Mammary epithelial cell (primary cell): ENCODE measurements at regions of chr22 and their contacts with region 1.

Region 1: GRCh38 chr22:41301105-41302020 is at the start of gene ZC3H7B:
- DNase-seq: peak; percentile 80
- H3K4me3 ChIP-seq: peak within 1 kb of the TSS; percentile 82 to 90 (median 86)
- H3K27ac ChIP-seq: peak within 1 kb of the TSS; percentile 75
- H3K4me1 ChIP-seq: peaks cover 21% of the 10 kb centered on the region
- H3K27me3 ChIP-seq: no peaks in the 10 kb centered on the region
- CTCF ChIP-seq: peak in 1 of 2 donors; percentile 70
- total RNA-seq, gene ZC3H7B: 30.0 to 62.9 TPM

Region 2: DNA sequence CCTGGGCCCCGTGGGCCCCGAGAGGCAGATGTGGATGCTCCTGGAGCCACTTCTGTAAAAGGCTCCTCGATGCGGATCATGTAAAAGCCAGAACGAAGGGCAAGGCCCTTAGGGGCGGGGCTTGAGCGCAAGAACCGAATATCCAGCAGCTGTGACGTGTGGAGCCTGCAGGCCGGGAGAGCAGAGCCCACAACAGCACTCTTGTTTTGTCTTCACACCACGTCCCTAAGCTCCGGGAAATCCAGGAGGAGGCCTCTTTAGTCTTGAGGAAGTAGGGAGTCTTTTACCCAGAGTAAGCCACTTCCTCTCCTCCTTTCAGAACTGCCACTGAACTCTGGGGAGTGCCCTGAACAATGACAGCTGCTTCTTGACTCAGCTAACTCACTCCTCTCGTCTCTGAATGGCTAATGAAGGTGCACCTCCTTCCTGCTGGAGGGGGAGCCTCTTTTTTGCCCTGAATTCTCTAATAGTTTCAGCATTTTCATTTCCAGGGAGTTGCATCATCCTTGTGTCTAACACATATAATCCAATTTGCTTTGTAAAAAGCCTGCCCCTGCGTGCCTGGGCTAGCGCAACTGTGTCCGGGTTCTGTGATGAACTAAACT is 83.7 kb before region 1 on chr22:
- CTCF ChIA-PET with region 1: no interaction called
- dilution Hi-C with region 1: no loop called
- in situ Hi-C with region 1: no loop called
- intact Hi-C with region 1: loop called (anchors 1 kb)
- DNase-seq: no peak
- H3K4me3 ChIP-seq: no peak overlapping the region
- H3K27ac ChIP-seq: peak overlapping the region; percentile 9
- H3K4me1 ChIP-seq: peaks cover 12% of the 10 kb centered on the region
- H3K27me3 ChIP-seq: no peaks in the 10 kb centered on the region
- CTCF ChIP-seq: no peak

Region 3: DNA sequence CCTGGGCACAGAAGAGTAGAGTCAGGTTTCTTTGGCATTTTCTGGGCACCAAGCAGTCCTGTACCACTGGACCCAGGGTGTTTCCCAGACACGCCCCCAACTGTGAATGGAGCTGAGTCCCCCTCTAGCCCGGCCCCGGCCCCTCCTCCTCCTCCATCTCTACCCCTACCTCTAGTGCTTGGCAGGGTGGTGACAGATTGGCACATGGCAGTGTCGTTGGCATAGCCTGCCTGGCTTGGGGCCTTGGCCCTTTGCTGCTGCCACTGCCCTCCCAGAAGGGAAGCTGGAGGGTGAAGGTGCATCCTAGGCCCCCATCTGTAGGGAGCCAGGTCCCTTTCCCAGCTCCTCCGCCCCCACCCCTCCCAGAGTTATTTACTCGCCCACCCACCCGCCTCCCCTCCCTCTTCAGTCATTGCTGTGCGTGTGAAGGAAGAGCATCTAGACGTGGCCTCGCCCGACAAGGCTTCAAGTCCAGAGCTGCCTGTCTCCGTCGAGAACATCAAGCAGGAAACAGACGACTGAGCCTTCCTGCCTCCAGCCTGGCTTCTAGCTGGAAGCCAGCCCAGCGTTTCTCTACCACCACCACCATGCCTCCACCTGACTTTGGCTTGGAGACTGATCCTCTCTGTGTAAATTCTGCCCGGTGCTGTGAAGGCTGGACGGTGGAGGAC is 71.5 kb before region 1 on chr22:
- CTCF ChIA-PET with region 1: no interaction called
- dilution Hi-C with region 1: no loop called
- in situ Hi-C with region 1: no loop called
- intact Hi-C with region 1: no loop called
- DNase-seq: no peak
- H3K4me3 ChIP-seq: no peak overlapping the region
- H3K27ac ChIP-seq: no peak overlapping the region
- H3K4me1 ChIP-seq: no peaks in the 10 kb centered on the region
- H3K27me3 ChIP-seq: no peaks in the 10 kb centered on the region
- CTCF ChIP-seq: no peak

Region 4: GRCh38 chr22:41274856-41275255 is 26.5 kb before region 1 on chr22:
- CTCF ChIA-PET with region 1: interaction called, 4 read pairs
- dilution Hi-C with region 1: loop called (anchors 5 kb)
- in situ Hi-C with region 1: no loop called
- intact Hi-C with region 1: loop called (anchors 2 kb)
- DNase-seq: no peak
- H3K4me3 ChIP-seq: no peak overlapping the region
- H3K27ac ChIP-seq: no peak overlapping the region
- H3K4me1 ChIP-seq: peaks cover 8% of the 10 kb centered on the region
- H3K27me3 ChIP-seq: no peaks in the 10 kb centered on the region
- CTCF ChIP-seq: no peak

Region 5: DNA sequence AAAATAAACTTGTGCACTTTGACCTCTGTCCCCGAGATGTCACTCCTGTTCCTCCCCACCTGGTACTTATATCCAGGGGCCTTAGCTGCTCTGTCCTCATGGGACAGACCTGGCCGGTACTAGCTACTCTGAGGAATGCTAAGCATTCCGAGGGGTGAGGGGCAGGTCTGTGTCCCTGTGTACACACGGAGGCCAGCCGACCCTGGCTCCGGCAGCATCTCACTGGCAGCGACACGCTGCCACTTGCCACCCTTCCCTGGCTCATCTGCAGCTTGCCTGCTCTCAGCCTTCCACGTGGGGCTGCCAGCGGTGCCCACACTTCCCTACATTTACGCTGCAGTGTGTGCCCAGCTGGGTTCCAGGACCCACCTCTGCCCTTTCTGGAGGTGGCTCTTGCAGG is 58.8 kb after region 1 on chr22:
- CTCF ChIA-PET with region 1: no interaction called
- dilution Hi-C with region 1: loop called (anchors 5 kb)
- in situ Hi-C with region 1: no loop called
- intact Hi-C with region 1: no loop called
- DNase-seq: no peak
- H3K4me3 ChIP-seq: no peak overlapping the region
- H3K27ac ChIP-seq: no peak overlapping the region
- H3K4me1 ChIP-seq: peaks cover 4% of the 10 kb centered on the region
- H3K27me3 ChIP-seq: no peaks in the 10 kb centered on the region
- CTCF ChIP-seq: no peak

Region 6: GRCh38 chr22:41448189-41448808 is 146.9 kb after region 1 on chr22:
- CTCF ChIA-PET with region 1: no interaction called
- dilution Hi-C with region 1: no loop called
- in situ Hi-C with region 1: no loop called
- intact Hi-C with region 1: loop called (anchors 5 kb)
- DNase-seq: peak; percentile 99
- H3K4me3 ChIP-seq: peak overlapping the region; percentile 76 to 86 (median 81)
- H3K27ac ChIP-seq: peak overlapping the region; percentile 82
- H3K4me1 ChIP-seq: peaks cover 4% of the 10 kb centered on the region
- H3K27me3 ChIP-seq: no peaks in the 10 kb centered on the region
- CTCF ChIP-seq: no peak